IMR-90 (cell line): ENCODE measurements at regions of chr2 and their contacts with region 1.

Region 1: DNA sequence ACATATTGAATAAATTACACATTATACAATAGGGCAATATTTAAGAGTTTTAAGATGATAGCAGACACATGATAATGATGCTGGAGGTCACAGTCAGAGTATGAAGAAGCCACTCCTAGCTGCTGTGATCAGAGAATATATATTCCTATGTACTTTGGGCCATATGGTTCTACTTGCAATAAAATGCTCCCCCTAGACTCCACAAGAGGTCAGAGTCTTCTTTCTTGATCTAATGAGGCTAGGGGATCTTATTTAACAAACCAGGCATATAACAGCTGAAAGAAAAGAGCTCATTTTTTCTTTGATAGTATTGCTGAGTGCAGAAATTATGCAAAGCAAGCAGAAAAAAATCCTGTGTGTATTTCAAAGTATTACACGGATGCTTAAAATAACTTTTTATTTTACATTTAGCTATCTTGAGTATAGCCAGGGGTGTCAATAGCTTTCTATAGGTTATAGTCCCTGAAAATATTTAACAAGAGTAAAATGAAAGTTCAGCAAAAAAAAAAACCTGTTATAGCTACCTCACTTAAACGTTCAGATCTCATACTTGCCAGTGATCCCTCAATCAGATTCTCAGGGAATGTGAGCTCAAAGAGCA is 748.7 kb upstream of the CHAC2 start:
- DNase-seq: peak; percentile 34
- ATAC-seq: peak; percentile 62
- H3K4me3 ChIP-seq: no peak overlapping the region
- H3K27ac ChIP-seq: no peak overlapping the region
- H3K4me1 ChIP-seq: no peaks in the 10 kb centered on the region; the same call in 1 of the 2 replicates
- H3K27me3 ChIP-seq: no peaks in the 10 kb centered on the region
- CTCF ChIP-seq: peak; percentile 30; the same call in 1 of the 2 replicates
- POLR2A ChIP-seq: no peak
- RAD21 ChIP-seq: peak; percentile 19; the same call in 1 of the 2 replicates

Region 2: GRCh38 chr2:52961403-52961802 is 57.5 kb before region 1 on chr2:
- CTCF ChIA-PET with region 1: no interaction called
- POLR2A ChIA-PET with region 1: interaction called, 11 read pairs
- dilution Hi-C with region 1: no loop called
- in situ Hi-C with region 1: no loop called
- intact Hi-C with region 1: no loop called
- DNase-seq: no peak
- ATAC-seq: no peak
- H3K4me3 ChIP-seq: no peak overlapping the region
- H3K27ac ChIP-seq: no peak overlapping the region
- H3K4me1 ChIP-seq: no peaks in the 10 kb centered on the region
- H3K27me3 ChIP-seq: no peaks in the 10 kb centered on the region
- CTCF ChIP-seq: no peak
- POLR2A ChIP-seq: no peak
- RAD21 ChIP-seq: no peak